ENCODE measurements at regions of chr21 and their contacts with region 1.

Region 1: GRCh38 chr21:18812308-18812707 is 408.7 kb upstream of the TMPRSS15 start:
- DNase-seq: no peak
- ATAC-seq: no peak

Region 2: GRCh38 chr21:18917622-18918021 is 105.3 kb after region 1 on chr21:
- intact Hi-C with region 1: loop called (anchors 10 kb)
- DNase-seq: no peak
- ATAC-seq: no peak

Measured in Right ventricle myocardium inferior (tissue), 1 donor.